Ascending aorta (tissue), 2 donors: ENCODE measurements at regions of chrX and their contacts with region 1.

Region 1: DNA sequence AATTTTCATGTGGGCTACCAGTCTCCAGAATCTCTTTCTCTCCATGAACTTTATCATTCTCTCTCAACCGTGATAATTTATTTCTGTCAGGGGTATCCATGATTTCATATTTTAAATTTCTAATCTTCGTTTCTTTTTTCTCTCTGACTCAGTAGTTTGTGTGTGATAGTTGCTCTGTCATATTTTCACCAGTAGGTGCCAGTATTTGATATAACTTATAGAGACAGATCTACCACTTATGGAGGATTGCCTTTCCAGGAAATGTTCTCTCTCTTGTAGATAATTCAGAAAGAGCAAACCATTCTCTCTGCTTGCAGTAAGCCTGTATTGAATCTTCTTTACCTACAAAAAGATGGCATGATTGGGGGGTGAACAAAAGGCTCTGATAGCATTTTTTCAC is 79.3 kb upstream of the DYNLT3 start:
- DNase-seq: no peak
- H3K4me3 ChIP-seq: no peak overlapping the region
- H3K27ac ChIP-seq: no peak overlapping the region
- H3K4me1 ChIP-seq: no peaks in the 10 kb centered on the region
- H3K27me3 ChIP-seq: no peaks in the 10 kb centered on the region
- CTCF ChIP-seq: peak; percentile 19 to 49 (median 32)

Region 2: GRCh38 chrX:37825209-37825842 is 101.4 kb before region 1 on chrX:
- intact Hi-C with region 1: no loop called
- DNase-seq: peak in 1 of 2 donors; percentile 68
- H3K4me3 ChIP-seq: no peak overlapping the region
- H3K27ac ChIP-seq: no peak overlapping the region
- H3K4me1 ChIP-seq: no peaks in the 10 kb centered on the region
- H3K27me3 ChIP-seq: no peaks in the 10 kb centered on the region
- CTCF ChIP-seq: peak; percentile 74 to 83 (median 81)

Region 3: DNA sequence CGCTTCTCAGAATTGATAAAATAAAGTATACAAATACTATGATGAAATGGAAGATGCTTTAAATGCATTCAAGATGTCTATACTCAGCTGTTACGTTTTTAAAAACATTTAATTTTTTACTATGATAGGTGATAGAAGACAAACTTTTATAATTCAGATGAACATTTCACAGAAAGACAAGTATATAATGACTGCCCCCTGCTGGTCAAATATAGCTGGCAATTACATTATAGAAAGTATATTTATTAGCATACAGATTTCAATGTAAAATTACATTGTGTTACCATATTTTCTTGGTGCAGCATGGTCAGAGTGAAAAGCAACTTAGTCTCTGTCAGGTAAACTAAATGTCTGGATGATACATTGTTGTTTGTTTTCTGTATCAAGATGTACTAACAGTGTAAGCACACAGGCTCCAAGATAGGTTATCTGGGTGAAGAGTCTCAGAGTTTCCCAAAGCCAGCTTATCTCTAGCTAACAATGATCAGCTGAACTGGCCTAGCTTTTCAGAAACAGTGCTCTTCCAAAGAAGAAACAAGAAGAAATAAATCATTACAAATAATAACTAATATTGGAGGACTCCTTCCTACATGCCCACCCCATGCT is 239.9 kb after region 1 on chrX:
- intact Hi-C with region 1: loop called (anchors 5 kb)
- DNase-seq: no peak
- H3K4me3 ChIP-seq: no peak overlapping the region
- H3K27ac ChIP-seq: no peak overlapping the region
- H3K4me1 ChIP-seq: no peaks in the 10 kb centered on the region
- H3K27me3 ChIP-seq: no peaks in the 10 kb centered on the region
- CTCF ChIP-seq: peak in 2 of 3 experiments; percentile 38 to 54